Right lobe of liver (tissue), 6 donors: ENCODE measurements at regions of chr12 and their contacts with region 1.

Region 1: DNA sequence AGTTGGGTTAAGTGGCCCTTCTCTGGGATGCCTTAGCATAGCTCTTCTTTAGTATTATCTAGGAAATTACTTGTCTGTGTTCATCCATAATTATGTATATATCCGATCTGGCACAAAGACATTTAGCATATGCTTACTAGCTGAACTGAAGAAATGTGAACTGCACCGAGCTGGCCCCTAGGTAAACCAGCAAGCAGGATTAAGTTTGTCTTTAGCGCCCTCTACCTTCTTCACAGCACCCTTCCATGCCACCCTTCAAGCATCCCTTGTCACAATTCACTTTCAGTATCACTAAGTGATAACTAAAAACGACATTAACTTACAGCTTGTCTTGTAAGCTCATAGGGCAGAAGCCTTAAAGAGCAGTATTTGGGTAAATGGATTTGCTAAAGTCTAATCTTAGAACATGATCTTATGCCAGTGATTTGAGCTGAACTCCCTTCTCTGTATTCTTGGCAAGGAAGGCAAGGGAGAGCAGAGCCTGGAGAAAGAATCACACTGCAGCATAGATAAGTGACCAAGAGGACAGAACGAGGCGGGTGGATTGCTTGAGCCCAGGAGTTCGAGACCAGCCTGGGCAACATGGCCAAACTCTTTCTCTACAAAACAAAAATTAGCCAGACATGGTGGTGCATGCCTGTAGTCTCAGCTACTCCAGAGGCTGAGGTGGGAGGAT is 2.6 kb upstream of the HAL start:
- DNase-seq: peak in 1 of 3 donors; percentile 67
- ATAC-seq: peak; percentile 62 to 79 (median 68)
- H3K4me3 ChIP-seq: no peak overlapping the region
- H3K27ac ChIP-seq: peak overlapping the region in 2 of 3 donors; percentile 2 to 82
- H3K4me1 ChIP-seq: peaks cover 0 to 24% (median 3%) of the 10 kb centered on the region in 4 donors
- H3K27me3 ChIP-seq: no peaks in the 10 kb centered on the region
- CTCF ChIP-seq: peak; percentile 71 to 78 (median 74)
- POLR2A ChIP-seq: no peak

Region 2: DNA sequence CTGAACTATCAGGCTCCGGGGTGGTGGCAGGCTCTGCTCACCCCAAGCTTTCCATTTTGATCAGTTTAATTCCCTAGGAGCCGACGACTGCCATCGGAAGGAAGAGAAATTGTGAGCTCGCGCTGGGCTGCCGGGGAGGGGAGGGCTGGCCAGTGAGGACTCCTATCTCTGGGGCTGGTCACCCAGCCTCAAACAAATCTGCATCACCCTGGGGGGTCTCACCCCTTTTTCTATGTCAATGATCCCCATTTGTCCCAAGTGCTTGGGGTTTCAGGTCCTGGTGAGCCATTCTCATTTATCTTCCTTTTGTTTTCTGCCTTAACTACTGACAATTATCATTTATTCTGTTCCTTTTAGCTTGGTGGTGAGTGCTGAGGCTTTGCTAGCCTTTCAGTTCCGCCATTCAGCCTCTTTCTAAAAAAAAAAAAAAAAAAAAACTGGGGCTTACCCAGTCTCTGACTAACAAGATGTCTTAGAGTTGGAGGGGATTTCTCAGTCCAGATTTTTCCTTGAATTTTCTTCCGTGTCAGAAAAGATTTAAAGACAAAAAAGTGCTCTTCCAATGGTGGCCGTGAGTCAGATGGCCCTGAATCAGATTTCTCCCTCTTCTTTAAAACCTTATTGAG is 424.7 kb before region 1 on chr12:
- intact Hi-C with region 1: loop called in 1 of 2 experiments (anchors 10 kb)
- DNase-seq: no peak
- ATAC-seq: peak in 1 of 4 donors; percentile 28
- H3K4me3 ChIP-seq: no peak overlapping the region
- H3K27ac ChIP-seq: no peak overlapping the region
- H3K4me1 ChIP-seq: no peaks in the 10 kb centered on the region
- H3K27me3 ChIP-seq: no peaks in the 10 kb centered on the region
- CTCF ChIP-seq: no peak
- POLR2A ChIP-seq: no peak

Region 3: GRCh38 chr12:95742586-95742985 is 256.2 kb before region 1 on chr12:
- intact Hi-C with region 1: no loop called
- DNase-seq: no peak
- ATAC-seq: no peak
- H3K4me3 ChIP-seq: no peak overlapping the region
- H3K27ac ChIP-seq: no peak overlapping the region
- H3K4me1 ChIP-seq: no peaks in the 10 kb centered on the region
- H3K27me3 ChIP-seq: no peaks in the 10 kb centered on the region
- CTCF ChIP-seq: no peak
- POLR2A ChIP-seq: no peak

Region 4: GRCh38 chr12:95918194-95918993 is 80.4 kb before region 1 on chr12:
- intact Hi-C with region 1: loop called in 1 of 2 experiments (anchors 5 kb)
- DNase-seq: peak in 1 of 3 donors; percentile 55
- ATAC-seq: peak; percentile 99 to 100 (median 99)
- H3K4me3 ChIP-seq: no peak overlapping the region
- H3K27ac ChIP-seq: no peak overlapping the region
- H3K4me1 ChIP-seq: no peaks in the 10 kb centered on the region
- H3K27me3 ChIP-seq: no peaks in the 10 kb centered on the region
- CTCF ChIP-seq: peak; percentile 75 to 90 (median 86)
- POLR2A ChIP-seq: no peak

Region 5: DNA sequence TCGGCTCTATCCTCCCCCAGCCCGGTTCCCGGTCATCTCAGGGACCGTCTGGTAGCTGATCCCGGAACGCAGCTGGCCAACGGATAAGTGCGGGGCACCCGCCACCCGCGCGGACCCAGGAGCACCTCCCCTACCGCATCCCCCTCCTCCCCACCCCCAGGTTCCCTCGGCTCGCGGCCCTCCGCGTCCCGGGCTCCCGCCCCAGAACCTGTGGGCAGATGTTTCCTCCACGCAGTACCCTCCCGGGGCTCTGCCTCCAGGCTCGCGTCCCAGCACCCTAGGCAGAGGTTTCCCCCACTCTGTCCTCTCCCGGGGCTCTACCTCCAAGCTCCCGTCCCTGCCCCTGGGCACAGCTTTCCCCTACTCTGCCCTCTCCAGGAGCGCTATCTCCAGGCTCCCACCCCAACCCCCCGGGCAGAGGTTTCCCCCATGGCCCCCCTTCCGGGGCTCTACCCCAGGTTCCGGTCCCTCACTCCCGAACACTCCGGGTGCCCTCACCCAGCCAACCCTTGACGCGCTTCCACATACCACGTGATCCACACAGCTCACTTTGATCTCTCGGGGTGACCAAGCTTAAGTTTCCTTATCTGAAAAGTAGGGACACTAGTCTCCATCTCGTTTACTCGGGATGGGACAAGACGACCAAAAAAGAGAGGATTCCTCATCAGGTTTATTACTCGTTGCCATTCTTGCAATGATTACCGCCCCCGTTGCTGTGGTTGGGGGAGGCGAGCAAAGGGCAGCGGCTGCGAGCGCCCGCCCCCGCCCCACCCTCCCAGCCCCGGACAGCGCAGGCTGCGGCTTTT is 56.0 kb before region 1 on chr12 and contains the start of gene CCDC38:
- intact Hi-C with region 1: no loop called
- DNase-seq: peak; percentile 86 to 93 (median 93)
- ATAC-seq: peak; percentile 74 to 88 (median 80)
- H3K4me3 ChIP-seq: peak within 1 kb of the TSS; percentile 59 to 98 (median 92)
- H3K27ac ChIP-seq: peak within 1 kb of the TSS; percentile 95 to 100 (median 97)
- H3K4me1 ChIP-seq: peaks cover 0 to 30% (median 9%) of the 10 kb centered on the region in 4 donors
- H3K27me3 ChIP-seq: no peaks in the 10 kb centered on the region
- CTCF ChIP-seq: no peak
- POLR2A ChIP-seq: peak; percentile 72
- total RNA-seq, gene CCDC38: 0.19 to 1.8 (median 0.89) TPM

Region 6: DNA sequence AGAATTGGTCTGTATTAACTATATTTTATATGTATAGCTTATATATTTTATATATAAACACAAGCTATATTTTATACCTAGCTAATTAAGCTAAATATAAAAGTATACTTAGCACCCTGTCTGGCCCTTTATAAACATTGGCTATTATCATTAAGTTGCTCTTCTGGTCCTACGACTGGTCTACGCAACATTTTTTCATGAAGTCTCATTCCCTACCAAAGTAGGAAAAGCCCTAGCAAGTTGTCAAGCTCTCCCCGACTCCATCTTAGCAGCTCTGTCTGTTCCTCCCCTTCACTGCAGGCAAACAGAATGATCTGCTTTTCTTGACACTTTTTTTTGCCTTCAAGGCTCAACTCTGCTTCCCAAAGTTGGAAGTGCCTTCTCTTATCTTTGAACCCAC is 158.7 kb after region 1 on chr12:
- intact Hi-C with region 1: no loop called
- DNase-seq: no peak
- ATAC-seq: no peak
- H3K4me3 ChIP-seq: no peak overlapping the region
- H3K27ac ChIP-seq: no peak overlapping the region
- H3K4me1 ChIP-seq: no peaks in the 10 kb centered on the region
- H3K27me3 ChIP-seq: no peaks in the 10 kb centered on the region
- CTCF ChIP-seq: no peak
- POLR2A ChIP-seq: no peak